ENCODE measurements at regions of chr9 and their contacts with region 1.

Region 1: GRCh38 chr9:21579209-21579608 is 97.1 kb upstream of the IFNE start:
- DNase-seq: no peak
- H3K4me3 Mint-ChIP-seq: peak overlapping the region; percentile 55
- H3K27ac Mint-ChIP-seq: peak overlapping the region; percentile 91
- H3K4me1 Mint-ChIP-seq: peaks cover 32% of the 10 kb centered on the region
- H3K27me3 Mint-ChIP-seq: no peaks in the 10 kb centered on the region
- CTCF ChIP-seq: no peak

Region 2: DNA sequence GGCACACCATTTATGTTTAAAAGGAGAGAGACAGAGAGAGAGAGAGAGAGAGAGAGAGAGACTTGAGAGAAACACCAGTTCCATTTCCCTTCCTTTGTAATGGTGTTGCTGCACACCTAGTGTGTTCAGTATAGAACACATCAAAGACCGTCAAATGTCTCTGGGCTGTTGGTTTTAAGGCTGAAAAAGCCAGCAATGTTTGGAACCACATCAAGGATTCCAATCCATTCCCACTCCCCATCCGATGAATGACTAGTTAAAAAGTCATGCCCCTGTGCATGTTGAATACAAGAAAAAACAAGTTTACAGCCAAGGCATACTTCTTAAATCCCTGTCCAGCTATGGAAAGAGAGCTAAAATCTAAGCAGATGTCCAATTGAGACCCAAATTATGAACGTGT is 14.1 kb before region 1 on chr9:
- CTCF ChIA-PET with region 1: interaction called, 3 read pairs
- intact Hi-C with region 1: loop called (anchors 2 kb)
- DNase-seq: no peak
- H3K4me3 Mint-ChIP-seq: peak overlapping the region; percentile 65
- H3K27ac Mint-ChIP-seq: peak overlapping the region; percentile 96
- H3K4me1 Mint-ChIP-seq: peaks cover 46% of the 10 kb centered on the region
- H3K27me3 Mint-ChIP-seq: no peaks in the 10 kb centered on the region
- CTCF ChIP-seq: no peak

Measured in Calu3 (cell line).